ENCODE measurements at regions of chr7 and their contacts with region 1.

Region 1: GRCh38 chr7:44735403-44736165 is 13.1 kb upstream of the ZMIZ2 start:
- DNase-seq: peak; percentile 96
- ATAC-seq: peak; percentile 78
- H3K4me3 ChIP-seq: peak overlapping the region; percentile 34; the same call in 1 of the 2 replicates
- H3K27ac ChIP-seq: peak overlapping the region; percentile 95
- H3K4me1 ChIP-seq: peaks cover 20% of the 10 kb centered on the region
- H3K27me3 ChIP-seq: no peaks in the 10 kb centered on the region
- CTCF ChIP-seq: no peak

Region 2: GRCh38 chr7:44606450-44607254 is 128.9 kb before region 1 on chr7 and contains the start of gene OGDH:
- CTCF ChIA-PET with region 1: no interaction called
- POLR2A ChIA-PET with region 1: no interaction called
- intact Hi-C with region 1: loop called (anchors 10 kb)
- DNase-seq: peak; percentile 98
- ATAC-seq: peak; percentile 97
- H3K4me3 ChIP-seq: peak within 1 kb of the TSS; percentile 81
- H3K27ac ChIP-seq: peak within 1 kb of the TSS; percentile 82
- H3K4me1 ChIP-seq: peaks cover 23% of the 10 kb centered on the region
- H3K27me3 ChIP-seq: no peaks in the 10 kb centered on the region
- CTCF ChIP-seq: no peak
- total RNA-seq, gene OGDH: 66.2 and 67.2 TPM in 2 replicates

Region 3: GRCh38 chr7:44633254-44634186 is 102.1 kb before region 1 on chr7:
- CTCF ChIA-PET with region 1: interaction called, 4 read pairs
- POLR2A ChIA-PET with region 1: no interaction called
- intact Hi-C with region 1: loop called (anchors 1 kb)
- DNase-seq: peak; percentile 96
- ATAC-seq: peak; percentile 75
- H3K4me3 ChIP-seq: no peak overlapping the region
- H3K27ac ChIP-seq: peak overlapping the region; percentile 98
- H3K4me1 ChIP-seq: peaks cover 58% of the 10 kb centered on the region
- H3K27me3 ChIP-seq: no peaks in the 10 kb centered on the region
- CTCF ChIP-seq: no peak

Region 4: GRCh38 chr7:44638611-44639557 is 96.7 kb before region 1 on chr7:
- CTCF ChIA-PET with region 1: interaction called, 4 read pairs
- POLR2A ChIA-PET with region 1: no interaction called
- intact Hi-C with region 1: loop called (anchors 1 kb)
- DNase-seq: peak; percentile 82
- ATAC-seq: peak; percentile 84
- H3K4me3 ChIP-seq: no peak overlapping the region
- H3K27ac ChIP-seq: peak overlapping the region; percentile 98
- H3K4me1 ChIP-seq: peaks cover 51% of the 10 kb centered on the region
- H3K27me3 ChIP-seq: no peaks in the 10 kb centered on the region
- CTCF ChIP-seq: no peak

Region 5: GRCh38 chr7:44748045-44748947 is 12.7 kb after region 1 on chr7 and contains the start of gene ZMIZ2:
- CTCF ChIA-PET with region 1: no interaction called
- POLR2A ChIA-PET with region 1: interaction called, 4 read pairs
- intact Hi-C with region 1: loop called (anchors 1 kb)
- DNase-seq: peak; percentile 84
- ATAC-seq: peak; percentile 85
- H3K4me3 ChIP-seq: peak within 1 kb of the TSS; percentile 85
- H3K27ac ChIP-seq: peak within 1 kb of the TSS; percentile 77
- H3K4me1 ChIP-seq: peaks cover 24% of the 10 kb centered on the region
- H3K27me3 ChIP-seq: no peaks in the 10 kb centered on the region
- CTCF ChIP-seq: no peak
- total RNA-seq, gene ZMIZ2: 18.3 and 26.6 TPM in 2 replicates

Region 6: DNA sequence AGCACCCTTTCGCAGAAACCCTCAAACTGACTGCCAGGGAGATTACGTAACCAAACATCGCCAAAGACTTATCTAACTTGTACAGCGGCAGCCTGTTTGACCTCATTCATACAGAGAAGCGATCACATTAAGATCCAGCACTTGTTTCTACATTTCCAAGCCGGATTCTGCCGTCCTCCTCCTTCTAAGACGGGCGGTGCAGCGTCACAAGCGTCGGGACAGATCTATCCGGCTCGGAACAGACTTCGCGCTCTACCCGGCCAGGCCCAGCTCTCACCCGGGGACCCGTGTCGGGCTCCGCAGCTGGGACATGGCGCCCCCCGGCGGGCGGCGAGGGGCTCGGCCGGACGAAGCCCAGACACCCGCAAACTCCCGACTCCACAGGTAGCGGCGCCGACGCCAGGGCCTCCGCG is 111.9 kb after region 1 on chr7:
- CTCF ChIA-PET with region 1: no interaction called
- POLR2A ChIA-PET with region 1: no interaction called
- intact Hi-C with region 1: loop called (anchors 10 kb)
- DNase-seq: peak; percentile 75
- ATAC-seq: peak; percentile 72
- H3K4me3 ChIP-seq: peak overlapping the region; percentile 77
- H3K27ac ChIP-seq: peak overlapping the region; percentile 45
- H3K4me1 ChIP-seq: peaks cover 11% of the 10 kb centered on the region
- H3K27me3 ChIP-seq: no peaks in the 10 kb centered on the region
- CTCF ChIP-seq: peak; percentile 77

Region 7: DNA sequence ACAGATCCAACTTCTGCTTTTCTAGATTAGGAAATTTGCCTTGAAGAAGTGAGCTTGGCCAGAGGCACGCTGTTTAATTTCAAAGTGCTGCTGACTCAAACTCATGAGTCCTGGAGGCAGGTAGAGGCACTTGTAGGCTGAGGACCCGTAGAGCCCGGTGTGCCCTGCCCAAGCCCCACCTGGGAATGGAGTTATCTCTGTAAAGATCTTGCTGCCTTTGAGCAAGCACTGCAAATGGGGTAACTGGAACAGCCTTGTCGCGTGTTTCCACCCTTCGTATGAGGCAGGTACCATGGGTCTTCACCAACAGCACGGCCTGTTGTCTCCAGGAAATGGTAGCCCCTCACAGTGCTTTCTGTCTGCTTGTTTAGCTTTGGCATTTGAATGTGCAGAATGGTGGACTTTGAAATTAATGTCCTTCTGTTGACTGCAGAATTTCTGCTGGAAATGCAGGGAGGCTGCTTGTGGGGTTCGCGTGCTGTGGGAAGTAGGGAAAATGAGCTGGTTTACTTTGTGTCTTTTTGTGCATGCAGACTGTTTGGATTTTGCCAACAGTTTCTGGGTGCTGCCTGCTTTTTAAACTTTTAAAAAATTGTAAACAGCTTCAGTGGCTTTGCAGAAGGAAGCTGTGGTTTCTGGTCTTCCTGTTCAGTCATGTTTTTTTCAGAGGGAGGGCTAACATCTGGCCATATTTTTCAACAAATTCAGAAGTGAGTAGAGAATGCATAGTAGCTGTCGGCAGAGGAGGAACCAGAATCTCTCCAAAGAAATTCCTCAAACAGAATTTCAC is 291.6 kb after region 1 on chr7:
- CTCF ChIA-PET with region 1: no interaction called
- POLR2A ChIA-PET with region 1: no interaction called
- intact Hi-C with region 1: no loop called
- DNase-seq: no peak
- ATAC-seq: no peak
- H3K4me3 ChIP-seq: no peak overlapping the region
- H3K27ac ChIP-seq: no peak overlapping the region
- H3K4me1 ChIP-seq: peaks cover 6% of the 10 kb centered on the region; the same call in 1 of the 2 replicates
- H3K27me3 ChIP-seq: no peaks in the 10 kb centered on the region
- CTCF ChIP-seq: no peak